GM12878 (cell line): ENCODE measurements at regions of chr3 and their contacts with region 1.

Region 1: DNA sequence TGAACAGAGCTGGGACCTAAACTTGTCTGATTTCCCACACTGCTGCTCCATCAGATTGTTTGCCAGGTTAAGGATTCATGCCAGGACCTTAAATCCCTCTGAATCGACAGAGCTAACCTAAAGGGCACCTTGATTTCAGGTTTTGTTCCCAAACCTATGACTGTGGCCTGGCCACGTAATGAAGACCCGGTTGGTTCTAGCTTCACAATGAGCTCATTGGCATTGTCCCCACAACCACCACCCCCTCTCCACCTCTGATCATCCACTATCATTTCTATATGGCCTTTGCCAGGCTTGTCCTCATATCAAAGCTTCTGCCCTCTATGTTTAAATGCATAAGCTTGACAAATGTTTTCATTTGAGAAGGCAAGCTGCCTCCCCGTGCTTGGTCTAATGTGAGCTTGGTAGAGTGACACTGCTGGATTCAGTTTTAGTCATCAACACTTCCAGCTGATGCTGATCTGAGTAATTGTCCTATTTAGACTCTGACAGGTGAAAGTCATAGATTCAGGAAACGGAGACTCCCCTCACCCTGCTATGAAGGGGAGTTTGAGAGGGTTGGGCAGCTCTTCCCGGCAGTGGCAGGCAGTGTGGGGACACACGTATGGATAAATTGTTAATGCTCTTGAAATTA is 407.1 kb upstream of the CFAP20DC start:
- DNase-seq: peak; percentile 67
- ATAC-seq: peak; percentile 93
- H3K4me3 ChIP-seq: no peak overlapping the region
- H3K27ac ChIP-seq: peak overlapping the region; percentile 71
- H3K4me1 ChIP-seq: peaks cover 23% of the 10 kb centered on the region
- H3K27me3 ChIP-seq: no peaks in the 10 kb centered on the region
- CTCF ChIP-seq: no peak
- EP300 ChIP-seq: peak; percentile 70 to 88; a peak in 3 of 4 replicates
- POLR2A ChIP-seq: no peak
- RAD21 ChIP-seq: peak; percentile 33; the same call in 1 of the 2 replicates

Region 2: DNA sequence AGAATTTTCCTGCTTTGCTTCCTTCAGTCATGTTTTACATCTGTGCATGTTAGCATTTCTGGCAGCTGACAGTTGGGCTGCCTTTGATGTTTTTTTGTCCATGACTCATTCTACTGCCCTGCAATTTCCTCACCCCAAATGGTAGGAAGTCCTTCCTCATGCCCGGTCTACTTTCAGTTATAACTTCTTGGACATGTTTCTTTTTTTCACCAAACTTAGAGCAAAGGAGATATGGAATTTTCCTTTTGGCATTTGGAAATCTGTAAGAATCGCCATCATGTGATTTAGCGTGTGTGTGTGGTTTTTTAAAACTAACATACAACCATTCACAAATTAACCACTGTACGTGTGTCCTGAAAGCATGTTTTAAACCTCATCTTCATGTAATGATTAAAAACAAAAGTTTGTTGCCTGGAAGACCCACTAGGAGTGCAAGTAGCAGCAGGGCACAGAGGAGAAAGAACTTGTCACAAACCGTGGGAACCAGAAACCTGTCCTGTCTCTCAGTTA is 23.6 kb after region 1 on chr3:
- CTCF ChIA-PET with region 1: no interaction called
- POLR2A ChIA-PET with region 1: interaction called, 3 read pairs
- RAD21 ChIA-PET with region 1: interaction called, 13 read pairs
- SMC1A ChIA-PET with region 1: interaction called, 11 read pairs
- in situ Hi-C with region 1: no loop called
- intact Hi-C with region 1: loop called (anchors 1 kb)
- DNase-seq: peak; percentile 49
- ATAC-seq: peak; percentile 92
- H3K4me3 ChIP-seq: no peak overlapping the region; the same call in 1 of the 2 replicates
- H3K27ac ChIP-seq: peak overlapping the region; percentile 71
- H3K4me1 ChIP-seq: peaks cover 15% of the 10 kb centered on the region
- H3K27me3 ChIP-seq: no peaks in the 10 kb centered on the region
- CTCF ChIP-seq: 0 out of 6 replicates have a peak, but pooled peaks of 1 of the 3 experiments have one; percentile 12
- EP300 ChIP-seq: peak; percentile 39 to 56; a peak in 2 of 4 replicates
- POLR2A ChIP-seq: no peak
- RAD21 ChIP-seq: peak; percentile 48